CD4-positive, alpha-beta memory T cell (primary cell): ENCODE measurements at regions of chr17 and their contacts with region 1.

Region 1: DNA sequence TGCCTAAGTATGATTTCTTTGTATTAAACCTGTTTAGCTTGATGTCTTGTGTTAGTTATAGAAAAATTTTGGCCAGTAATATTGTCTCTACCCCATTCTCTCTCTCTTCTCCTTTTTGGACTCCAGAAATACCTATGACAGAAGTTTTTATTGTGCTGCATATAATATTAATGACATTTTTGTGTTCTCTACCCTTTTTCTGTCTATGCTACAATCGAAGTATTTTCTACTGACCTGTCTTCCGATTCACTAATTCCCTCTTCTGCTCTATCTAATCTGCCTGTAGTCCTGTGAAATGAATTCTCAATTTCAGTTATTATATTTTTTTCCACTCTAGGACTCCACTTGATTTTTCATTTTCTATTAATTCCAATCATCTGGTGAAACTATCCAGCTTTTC is 26.0 kb upstream of the TMEM92 start:
- DNase-seq: no peak
- H3K4me3 ChIP-seq: no peak overlapping the region
- H3K4me3 Mint-ChIP-seq: no peak overlapping the region
- H3K27ac ChIP-seq: no peak overlapping the region
- H3K27ac Mint-ChIP-seq: no peak overlapping the region
- H3K4me1 ChIP-seq: no peaks in the 10 kb centered on the region
- H3K4me1 Mint-ChIP-seq: no peaks in the 10 kb centered on the region
- H3K27me3 ChIP-seq: peaks cover 10% of the 10 kb centered on the region
- H3K27me3 Mint-ChIP-seq: peaks cover 27 to 35% of the 10 kb centered on the region in 2 donors

Region 2: GRCh38 chr17:50218771-50219315 is 29.4 kb before region 1 on chr17:
- CTCF ChIA-PET with region 1: no interaction called
- POLR2A ChIA-PET with region 1: no interaction called
- intact Hi-C with region 1: loop called (anchors 2 kb)
- DNase-seq: no peak
- H3K4me3 ChIP-seq: no peak overlapping the region
- H3K4me3 Mint-ChIP-seq: no peak overlapping the region
- H3K27ac ChIP-seq: no peak overlapping the region
- H3K27ac Mint-ChIP-seq: no peak overlapping the region
- H3K4me1 ChIP-seq: no peaks in the 10 kb centered on the region
- H3K4me1 Mint-ChIP-seq: peaks cover 0 to 9% (median 0%) of the 10 kb centered on the region in 4 donors
- H3K27me3 ChIP-seq: no peaks in the 10 kb centered on the region
- H3K27me3 Mint-ChIP-seq: peaks cover 4 to 10% of the 10 kb centered on the region in 2 donors